ENCODE measurements at regions of chr6 and their contacts with region 1.

Region 1: DNA sequence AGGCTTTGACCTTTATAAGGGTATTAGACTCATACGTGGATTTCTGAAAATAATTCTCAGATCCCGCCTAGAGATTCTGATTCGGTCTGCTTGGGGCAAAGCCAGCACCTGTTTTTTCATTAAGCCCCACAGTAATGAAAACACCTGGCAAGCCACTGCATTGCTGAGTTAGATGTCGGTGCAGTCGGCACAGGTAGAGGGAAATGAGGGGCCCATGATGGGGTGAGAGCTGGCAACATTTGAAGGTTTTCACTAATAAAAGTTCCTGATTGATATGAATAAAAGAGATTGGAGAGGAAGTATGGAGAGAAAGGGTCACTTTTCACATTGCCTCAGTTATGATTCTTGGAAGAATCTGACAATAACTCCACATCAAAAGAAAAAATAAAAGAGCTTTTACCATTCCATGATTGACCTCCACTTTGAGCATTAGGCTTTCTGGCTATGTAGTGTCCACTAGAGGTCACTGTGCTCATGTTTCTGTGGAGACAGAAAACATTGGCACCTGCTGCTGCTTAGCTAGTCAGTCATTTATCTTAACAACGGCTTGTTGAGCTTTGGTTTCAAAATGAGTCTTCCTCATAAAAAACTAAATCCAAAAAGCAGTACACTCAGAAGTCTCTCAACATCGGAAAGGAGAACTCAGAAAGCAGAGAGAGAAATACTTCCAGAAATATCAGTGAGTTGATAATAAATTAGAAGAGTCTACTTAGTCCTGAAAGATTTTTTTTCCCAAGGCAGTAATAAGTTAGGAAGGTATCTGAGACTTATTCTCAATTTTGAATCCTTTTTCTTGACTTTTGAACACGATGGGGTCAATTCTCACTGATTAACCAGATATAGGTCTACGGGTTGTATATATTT is 53.3 kb upstream of the KLHL31 start:
- DNase-seq: peak; percentile 46

Region 2: GRCh38 chr6:53524455-53524815 is 194.4 kb before region 1 on chr6:
- in situ Hi-C with region 1: loop called (anchors 25 kb)
- DNase-seq: peak; percentile 22

Region 3: GRCh38 chr6:54071821-54072340 is 353.1 kb after region 1 on chr6:
- in situ Hi-C with region 1: no loop called
- DNase-seq: no peak